ENCODE measurements at regions of chr1 and their contacts with region 1.

Region 1: DNA sequence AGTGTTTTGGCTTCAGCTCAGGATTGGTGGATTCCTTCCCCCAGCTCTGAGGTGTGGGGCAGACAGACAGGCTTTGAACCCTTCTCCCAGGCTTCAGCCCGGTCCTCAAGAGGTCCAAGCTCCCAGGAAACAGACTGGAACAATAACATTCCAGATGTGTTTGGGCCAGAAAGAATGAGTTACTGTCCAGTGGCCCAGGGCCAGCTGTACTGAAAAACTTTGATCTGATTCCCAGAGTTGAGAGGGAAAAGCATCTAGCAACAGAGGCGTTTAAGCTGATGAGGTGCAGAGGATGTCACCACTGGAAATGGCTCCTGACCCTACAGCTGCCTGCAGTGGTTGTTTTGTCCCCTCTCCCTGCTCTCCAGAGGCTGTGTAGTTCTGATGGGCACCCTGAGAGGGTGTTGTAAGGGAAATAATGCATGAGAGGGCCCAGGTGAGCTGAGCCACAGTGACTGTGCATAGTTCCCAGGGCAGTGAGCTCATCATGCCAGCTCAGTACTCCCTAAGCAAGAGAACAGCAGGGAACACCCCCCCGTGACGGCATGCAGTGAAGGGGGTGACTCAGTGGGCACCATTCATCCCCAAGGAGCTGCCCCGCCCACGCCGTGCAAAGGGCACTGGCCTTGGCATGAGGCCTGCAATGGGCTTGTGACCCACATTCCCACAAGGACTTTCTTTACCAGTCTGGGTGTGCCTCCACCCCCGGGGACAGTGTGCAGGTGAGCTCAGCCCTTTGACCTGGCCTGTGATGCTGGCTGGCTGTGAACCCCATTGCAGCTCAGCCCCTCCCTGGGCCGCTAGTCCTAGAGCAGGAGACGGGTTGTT is 13.8 kb upstream of the SFN start:
- DNase-seq: no peak
- H3K4me3 ChIP-seq: no peak overlapping the region
- H3K27ac ChIP-seq: peak overlapping the region; percentile 87
- H3K27me3 ChIP-seq: no peaks in the 10 kb centered on the region
- CTCF ChIP-seq: no peak

Region 2: DNA sequence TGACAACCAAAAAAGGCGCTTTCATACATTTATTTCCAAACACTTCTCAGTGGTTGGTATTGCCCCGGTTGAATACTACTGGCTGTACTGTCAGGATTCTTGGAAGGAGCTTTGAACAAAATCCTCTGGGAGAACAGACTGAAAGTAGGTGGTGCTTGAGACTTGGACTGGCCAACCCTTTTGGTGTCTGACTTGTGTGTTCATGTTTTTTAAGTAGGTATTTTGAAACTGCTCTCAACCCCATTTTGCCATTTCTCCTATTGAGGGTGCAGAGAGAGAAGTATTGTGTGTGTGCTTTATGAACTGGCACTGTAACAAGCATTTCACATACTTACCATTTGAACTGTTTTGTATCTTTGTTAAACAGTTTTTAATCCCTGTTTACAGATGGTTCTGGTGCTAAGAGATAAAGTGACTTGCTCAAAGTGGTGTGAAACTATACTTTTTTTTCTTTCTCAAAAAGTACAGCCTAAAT is 132.1 kb before region 1 on chr1:
- CTCF ChIA-PET with region 1: no interaction called
- POLR2A ChIA-PET with region 1: no interaction called
- DNase-seq: no peak
- H3K4me3 ChIP-seq: no peak overlapping the region
- H3K27ac ChIP-seq: no peak overlapping the region
- H3K27me3 ChIP-seq: no peaks in the 10 kb centered on the region
- CTCF ChIP-seq: no peak

Region 3: GRCh38 chr1:26864610-26865527 is 15.7 kb after region 1 on chr1:
- CTCF ChIA-PET with region 1: interaction called, 5 read pairs
- POLR2A ChIA-PET with region 1: interaction called, 28 read pairs
- DNase-seq: peak; percentile 96
- H3K4me3 ChIP-seq: peak overlapping the region; percentile 73
- H3K27ac ChIP-seq: peak overlapping the region; percentile 97
- H3K27me3 ChIP-seq: no peaks in the 10 kb centered on the region
- CTCF ChIP-seq: no peak